Activated B cell treated with CpG ODN at 0.5 μM for 24 hours (primary cell): ENCODE measurements at regions of chr9 and their contacts with region 1.

Region 1: GRCh38 chr9:128322404-128323211 is at the starts of genes COQ4 and TRUB2:
- DNase-seq: peak; percentile 86
- ATAC-seq: peak; percentile 88
- H3K4me3 Mint-ChIP-seq: peak within 1 kb of the TSS; percentile 92
- H3K27ac Mint-ChIP-seq: peak within 1 kb of the TSS; percentile 97
- H3K4me1 Mint-ChIP-seq: peaks cover 19% of the 10 kb centered on the region
- H3K27me3 Mint-ChIP-seq: no peaks in the 10 kb centered on the region
- CTCF ChIP-seq: no peak
- total RNA-seq, gene COQ4: 36.2 and 45.6 TPM in 2 replicates
- total RNA-seq, gene TRUB2: 28.0 and 32.6 TPM in 2 replicates

Region 2: DNA sequence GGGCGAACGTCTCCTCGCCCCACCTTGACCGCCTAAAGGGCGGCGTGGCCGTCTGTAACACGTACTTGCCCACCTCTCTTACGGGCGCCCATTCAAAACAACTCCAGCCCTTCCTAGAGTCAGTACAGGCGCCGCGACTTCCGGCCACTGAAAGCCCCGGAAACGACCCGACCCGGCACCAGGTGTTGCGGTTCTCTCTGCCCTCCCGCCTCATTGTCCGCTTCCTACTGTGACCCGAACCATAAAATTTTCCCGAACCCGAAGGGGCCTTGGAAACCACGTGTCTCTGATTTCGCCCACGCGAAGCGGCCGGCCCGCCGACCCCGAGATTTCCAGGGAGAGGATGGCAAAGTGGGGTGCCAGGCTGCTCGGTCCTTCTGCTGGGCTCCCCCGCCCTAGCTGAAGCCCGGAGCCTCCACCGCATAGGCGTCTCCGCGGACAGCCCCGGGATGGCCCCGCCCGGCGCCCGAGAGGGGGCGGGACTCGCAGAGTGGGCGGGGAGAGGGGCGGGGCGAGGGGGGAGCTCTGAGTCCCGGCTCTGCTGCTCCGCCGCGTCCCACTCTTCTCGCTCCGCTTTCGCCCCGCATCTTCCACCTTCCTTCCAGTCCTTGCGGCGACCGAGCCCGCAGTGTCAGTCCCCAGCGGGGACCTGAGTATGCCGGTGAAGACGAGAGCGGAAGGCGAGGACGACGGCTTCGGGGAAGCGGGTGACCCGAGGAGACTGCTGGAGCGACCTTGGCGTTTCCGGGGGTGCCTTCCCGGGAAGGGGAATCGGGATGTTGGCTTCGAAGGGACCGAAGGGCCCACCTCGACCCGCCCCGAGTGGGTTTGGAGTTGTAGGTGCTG is 194.4 kb before region 1 on chr9:
- CTCF ChIA-PET with region 1: no interaction called
- POLR2A ChIA-PET with region 1: no interaction called
- intact Hi-C with region 1: loop called (anchors 5 kb)
- DNase-seq: peak; percentile 90
- ATAC-seq: peak; percentile 79
- H3K4me3 Mint-ChIP-seq: peak overlapping the region; percentile 97
- H3K27ac Mint-ChIP-seq: peak overlapping the region; percentile 99
- H3K4me1 Mint-ChIP-seq: peaks cover 34% of the 10 kb centered on the region
- H3K27me3 Mint-ChIP-seq: peaks cover 3% of the 10 kb centered on the region
- CTCF ChIP-seq: no peak

Region 3: DNA sequence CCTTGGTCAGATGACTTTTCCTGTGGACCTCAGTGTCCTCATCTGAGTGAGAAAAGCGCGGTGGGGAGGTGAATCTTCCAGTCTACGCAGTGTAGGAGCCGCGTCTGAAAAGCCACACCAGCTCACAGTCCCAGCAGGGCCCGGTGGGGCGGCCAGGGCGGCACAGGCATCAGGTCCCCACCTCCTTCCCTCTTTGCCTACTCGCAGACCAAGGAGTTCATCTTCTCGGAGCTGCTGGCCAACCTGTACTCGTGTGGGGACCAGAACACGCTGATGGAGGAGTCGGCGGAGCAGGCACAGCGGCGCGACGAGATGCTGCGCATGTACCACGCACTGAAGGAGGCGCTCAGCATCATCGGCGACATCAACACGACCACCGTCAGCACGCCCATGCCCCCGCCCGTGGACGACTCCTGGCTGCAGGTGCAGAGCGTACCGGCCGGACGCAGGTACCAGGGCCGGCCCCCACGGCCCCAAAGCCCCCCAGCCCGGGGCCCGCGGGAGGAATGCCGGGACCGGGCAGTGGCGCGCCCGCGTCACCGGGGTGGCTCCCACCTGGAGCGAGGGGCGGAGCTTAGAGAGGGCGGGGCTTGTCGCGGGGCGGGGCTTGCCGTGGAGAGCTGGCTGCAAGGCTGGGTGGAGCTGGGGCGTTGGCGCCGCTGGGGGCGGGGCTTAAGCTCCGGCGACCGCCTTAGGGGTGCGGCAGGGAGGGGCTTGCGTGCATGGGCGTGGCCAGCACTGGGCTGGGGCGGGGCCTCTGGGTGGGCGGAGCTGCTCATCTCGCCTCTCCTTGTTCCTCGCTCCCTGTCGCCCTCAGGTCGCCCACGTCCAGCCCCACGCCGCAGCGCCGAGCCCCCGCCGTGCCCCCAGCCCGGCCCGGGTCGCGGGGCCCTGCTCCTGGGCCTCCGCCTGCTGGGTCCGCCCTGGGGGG is 72.4 kb before region 1 on chr9:
- CTCF ChIA-PET with region 1: no interaction called
- POLR2A ChIA-PET with region 1: no interaction called
- intact Hi-C with region 1: loop called (anchors 1 kb)
- DNase-seq: peak; percentile 99
- ATAC-seq: peak; percentile 98
- H3K4me3 Mint-ChIP-seq: peak overlapping the region; percentile 83
- H3K27ac Mint-ChIP-seq: peak overlapping the region; percentile 79
- H3K4me1 Mint-ChIP-seq: peaks cover 29% of the 10 kb centered on the region
- H3K27me3 Mint-ChIP-seq: peaks cover 1% of the 10 kb centered on the region
- CTCF ChIP-seq: no peak

Region 4: GRCh38 chr9:128339771-128340690 is 17.4 kb after region 1 on chr9 and contains the start of gene SLC27A4:
- CTCF ChIA-PET with region 1: interaction called, 3 read pairs
- POLR2A ChIA-PET with region 1: interaction called, 3 read pairs
- intact Hi-C with region 1: loop called (anchors 1 kb)
- DNase-seq: peak; percentile 81
- ATAC-seq: peak; percentile 91
- H3K4me3 Mint-ChIP-seq: peak within 1 kb of the TSS; percentile 86
- H3K27ac Mint-ChIP-seq: peak within 1 kb of the TSS; percentile 80
- H3K4me1 Mint-ChIP-seq: peaks cover 10% of the 10 kb centered on the region
- H3K27me3 Mint-ChIP-seq: no peaks in the 10 kb centered on the region
- CTCF ChIP-seq: no peak
- total RNA-seq, gene SLC27A4: 13.6 and 14.4 TPM in 2 replicates

Region 5: GRCh38 chr9:128420060-128420650 is 97.5 kb after region 1 on chr9:
- CTCF ChIA-PET with region 1: no interaction called
- POLR2A ChIA-PET with region 1: no interaction called
- intact Hi-C with region 1: loop called (anchors 2 kb)
- DNase-seq: peak; percentile 81
- ATAC-seq: peak; percentile 89
- H3K4me3 Mint-ChIP-seq: peak overlapping the region; percentile 75
- H3K27ac Mint-ChIP-seq: no peak overlapping the region
- H3K4me1 Mint-ChIP-seq: peaks cover 8% of the 10 kb centered on the region
- H3K27me3 Mint-ChIP-seq: peaks cover 19% of the 10 kb centered on the region
- CTCF ChIP-seq: no peak

Region 6: GRCh38 chr9:128504485-128505413 is 182.1 kb after region 1 on chr9 and contains the start of gene GLE1:
- CTCF ChIA-PET with region 1: no interaction called
- POLR2A ChIA-PET with region 1: no interaction called
- intact Hi-C with region 1: loop called (anchors 2 kb)
- DNase-seq: peak; percentile 99
- ATAC-seq: peak; percentile 95
- H3K4me3 Mint-ChIP-seq: peak within 1 kb of the TSS; percentile 99
- H3K27ac Mint-ChIP-seq: peak within 1 kb of the TSS; percentile 98
- H3K4me1 Mint-ChIP-seq: peaks cover 24% of the 10 kb centered on the region
- H3K27me3 Mint-ChIP-seq: no peaks in the 10 kb centered on the region
- CTCF ChIP-seq: no peak
- total RNA-seq, gene GLE1: 28.8 and 31.8 TPM in 2 replicates

Region 7: DNA sequence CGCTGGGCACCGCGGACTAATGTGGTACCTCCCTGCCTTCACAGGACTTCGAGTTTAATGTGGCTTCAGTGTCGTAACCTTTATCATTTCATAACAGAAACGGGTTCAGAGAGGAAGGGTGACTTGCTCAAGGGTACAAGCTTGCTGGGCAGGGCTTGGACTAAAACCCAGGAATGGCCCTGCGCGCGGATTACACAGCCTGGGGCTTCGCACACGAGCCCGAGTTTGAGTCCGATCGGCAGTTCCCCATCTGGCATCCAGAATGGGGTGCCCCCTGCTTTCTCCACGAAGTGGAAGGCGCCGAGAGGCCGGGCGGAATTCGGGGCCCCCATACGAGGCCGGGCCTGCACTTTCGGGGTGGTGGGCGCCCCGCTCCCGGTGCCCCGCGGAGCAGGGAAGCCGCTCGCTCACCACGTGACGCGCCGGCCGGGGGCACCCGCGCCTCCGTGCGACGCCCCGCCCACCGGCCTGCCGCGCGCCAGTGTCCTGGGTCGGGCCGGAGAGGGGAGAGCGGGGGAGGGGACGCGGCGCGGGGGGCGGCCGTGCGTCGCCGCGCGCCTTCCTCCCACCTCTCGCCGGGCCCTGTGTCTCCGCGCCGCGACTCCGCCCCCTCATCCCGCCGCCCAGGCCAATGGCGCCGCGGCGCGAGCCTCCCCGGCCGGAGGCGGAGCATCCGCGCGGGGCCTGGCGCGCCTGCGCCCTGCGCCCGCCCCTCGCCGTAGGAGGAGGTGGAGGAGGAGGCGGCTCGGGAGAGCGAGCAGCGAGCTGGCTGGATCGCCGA is 366.1 kb after region 1 on chr9 and contains the start of gene SET:
- CTCF ChIA-PET with region 1: no interaction called
- POLR2A ChIA-PET with region 1: no interaction called
- intact Hi-C with region 1: loop called (anchors 10 kb)
- DNase-seq: peak; percentile 97
- ATAC-seq: peak; percentile 81
- H3K4me3 Mint-ChIP-seq: peak within 1 kb of the TSS; percentile 98
- H3K27ac Mint-ChIP-seq: peak within 1 kb of the TSS; percentile 87
- H3K4me1 Mint-ChIP-seq: peaks cover 68% of the 10 kb centered on the region
- H3K27me3 Mint-ChIP-seq: no peaks in the 10 kb centered on the region
- CTCF ChIP-seq: no peak
- total RNA-seq, gene SET: 762 and 801 TPM in 2 replicates

Region 8: DNA sequence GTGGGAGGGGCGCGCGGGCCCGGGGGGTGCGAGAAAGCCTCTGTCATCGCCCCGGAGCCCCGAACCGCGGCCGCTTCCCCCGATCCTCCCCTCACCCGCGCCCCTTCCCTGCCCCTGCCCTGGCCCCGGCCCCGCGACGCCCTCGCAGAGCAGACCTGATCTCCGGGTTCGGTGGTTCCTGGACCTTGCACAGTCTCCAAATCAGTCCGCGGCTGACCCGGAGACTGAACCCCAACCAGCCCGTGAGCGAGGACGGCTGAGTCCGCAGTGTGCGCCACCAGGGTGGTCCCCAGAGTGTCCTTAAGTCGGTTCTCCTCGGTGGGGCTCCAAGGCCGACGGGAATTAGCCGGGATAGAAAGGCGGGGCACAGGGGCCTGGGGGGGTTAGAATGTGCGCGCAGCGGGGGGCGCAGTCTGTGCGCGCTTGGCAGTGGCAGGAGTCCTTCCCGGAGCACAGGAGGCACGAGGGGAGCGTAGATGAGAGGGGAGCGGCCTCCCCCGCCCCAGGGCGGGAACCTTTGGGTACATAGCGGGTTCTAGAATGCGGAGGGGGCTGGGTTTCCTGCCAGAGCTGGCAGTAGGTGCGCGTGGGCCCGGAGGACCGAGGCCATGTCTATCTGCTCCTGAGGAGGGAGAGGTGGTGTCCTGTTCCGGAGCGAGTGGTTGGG is 380.5 kb after region 1 on chr9:
- CTCF ChIA-PET with region 1: no interaction called
- POLR2A ChIA-PET with region 1: no interaction called
- intact Hi-C with region 1: no loop called
- DNase-seq: peak; percentile 41
- ATAC-seq: peak; percentile 47
- H3K4me3 Mint-ChIP-seq: peak overlapping the region; percentile 85
- H3K27ac Mint-ChIP-seq: peak overlapping the region; percentile 24
- H3K4me1 Mint-ChIP-seq: peaks cover 13% of the 10 kb centered on the region
- H3K27me3 Mint-ChIP-seq: no peaks in the 10 kb centered on the region
- CTCF ChIP-seq: no peak